ENCODE measurements at regions of chr15 and their contacts with region 1.

Region 1: DNA sequence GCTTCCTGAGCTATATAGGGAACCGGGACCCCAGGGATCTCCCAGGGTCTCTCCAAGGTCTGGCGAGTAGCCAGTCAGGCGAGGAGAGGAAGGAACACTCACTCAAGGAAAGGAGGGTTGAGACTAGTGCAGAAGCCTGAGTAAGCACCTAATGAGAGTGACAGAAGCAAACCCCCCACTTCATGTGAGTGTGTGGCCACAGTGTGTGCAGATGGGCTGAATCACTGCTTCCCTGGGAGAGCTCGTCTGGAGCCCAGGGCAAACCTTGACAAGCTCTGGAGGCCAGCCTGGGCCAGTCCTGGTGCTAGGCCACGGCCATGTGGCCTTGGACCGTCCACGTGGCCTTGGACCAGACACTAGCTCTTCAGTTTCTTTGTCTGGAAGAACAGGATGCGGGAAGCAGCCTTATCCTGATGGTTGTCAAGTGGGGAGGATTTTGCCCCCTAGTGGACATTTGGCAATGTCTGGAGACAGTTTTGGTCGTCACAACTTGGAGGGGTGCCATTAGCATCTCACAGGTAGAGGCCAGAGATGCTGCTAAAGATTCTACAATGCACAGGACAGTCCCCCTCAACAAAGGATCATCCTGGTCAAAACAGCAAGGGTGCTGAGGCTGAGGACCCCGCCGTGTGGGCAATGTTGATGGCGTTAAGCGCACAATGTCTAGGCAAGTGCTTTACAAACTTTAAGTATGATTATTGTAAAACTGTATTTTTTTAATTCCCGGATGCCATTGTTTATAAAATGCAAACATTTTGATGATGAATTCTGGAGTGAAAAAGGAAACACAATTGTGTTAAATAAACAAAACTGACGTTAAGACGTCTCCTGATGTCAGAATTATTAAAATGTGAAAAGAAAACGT is 34.8 kb upstream of the CTSH start:
- DNase-seq: peak; percentile 92 to 93
- ATAC-seq: peak; percentile 80 to 94
- H3K4me3 ChIP-seq: no peak overlapping the region
- H3K27ac ChIP-seq: peak overlapping the region; percentile 59 to 80
- H3K4me1 ChIP-seq: peaks cover 5% of the 10 kb centered on the region; the same call in 2 of the 3 replicates
- CTCF ChIP-seq: peak; percentile 90
- EP300 ChIP-seq: no peak
- POLR2A ChIP-seq: no peak
- RAD21 ChIP-seq: peak; percentile 78 to 81

Region 2: DNA sequence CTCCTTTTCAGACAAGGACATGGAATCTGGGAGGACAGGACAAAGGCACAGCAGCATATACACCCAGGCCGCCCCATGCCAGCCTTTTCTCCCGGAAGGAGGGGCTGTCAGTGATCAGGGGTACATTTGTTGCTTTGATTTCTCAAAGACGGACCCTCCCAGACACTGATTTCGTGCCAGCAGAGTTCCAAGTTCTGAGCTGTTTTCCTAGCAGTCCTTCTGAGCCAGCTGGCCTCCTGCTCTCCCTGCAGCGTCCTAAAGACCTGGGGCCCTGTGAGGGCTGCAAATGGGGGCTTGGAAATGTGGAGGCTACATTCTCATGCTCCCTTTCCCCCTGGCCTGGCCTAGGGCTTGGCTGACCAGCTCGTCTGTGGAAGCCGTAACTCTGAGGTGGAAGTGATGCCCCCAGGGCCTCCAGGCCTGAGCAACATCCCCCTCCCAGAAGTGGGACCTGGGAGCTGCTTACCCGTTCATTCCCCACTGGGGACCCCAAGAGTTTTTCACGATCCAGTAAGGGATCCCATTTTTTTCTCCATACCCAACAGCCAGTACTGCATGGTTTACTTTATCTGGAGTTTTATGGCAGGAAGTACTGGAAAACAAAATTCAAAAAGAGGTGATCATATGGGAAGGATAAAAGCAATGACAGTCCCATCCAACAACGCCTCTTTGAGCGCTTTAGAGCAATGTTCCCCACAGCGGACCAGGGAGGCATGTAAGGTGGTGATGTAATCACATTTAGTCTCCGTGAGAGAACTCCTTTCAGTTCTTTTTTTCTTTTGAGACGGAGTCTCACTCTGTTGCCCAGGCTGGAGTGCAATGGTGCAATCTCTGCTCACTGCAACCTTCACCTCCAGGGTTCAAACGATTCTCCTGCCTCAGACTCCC is 56.9 kb before region 1 on chr15:
- CTCF ChIA-PET with region 1: interaction called, 26 read pairs
- POLR2A ChIA-PET with region 1: no interaction called
- DNase-seq: no peak
- ATAC-seq: no peak
- H3K4me3 ChIP-seq: no peak overlapping the region
- H3K27ac ChIP-seq: no peak overlapping the region
- H3K4me1 ChIP-seq: no peaks in the 10 kb centered on the region
- CTCF ChIP-seq: no peak
- EP300 ChIP-seq: no peak
- POLR2A ChIP-seq: no peak
- RAD21 ChIP-seq: no peak

Region 3: GRCh38 chr15:78944669-78945407 is 34.9 kb before region 1 on chr15 and contains the start of gene CTSH:
- CTCF ChIA-PET with region 1: interaction called, 14 read pairs
- POLR2A ChIA-PET with region 1: no interaction called
- DNase-seq: peak; percentile 65 to 78
- ATAC-seq: peak; percentile 74 to 86
- H3K4me3 ChIP-seq: peak within 1 kb of the TSS; percentile 47
- H3K27ac ChIP-seq: peak within 1 kb of the TSS; percentile 66 to 85
- H3K4me1 ChIP-seq: peaks cover 12% of the 10 kb centered on the region; the same call in 2 of the 3 replicates
- CTCF ChIP-seq: no peak
- EP300 ChIP-seq: no peak
- POLR2A ChIP-seq: peak; percentile 39
- RAD21 ChIP-seq: no peak
- polyA plus RNA-seq, gene CTSH: 33.3 and 33.4 TPM in 2 replicates

Region 4: GRCh38 chr15:78968539-78969271 is 11.0 kb before region 1 on chr15:
- CTCF ChIA-PET with region 1: interaction called, 27 read pairs
- POLR2A ChIA-PET with region 1: no interaction called
- DNase-seq: no peak
- ATAC-seq: no peak
- H3K4me3 ChIP-seq: no peak overlapping the region
- H3K27ac ChIP-seq: no peak overlapping the region
- H3K4me1 ChIP-seq: no peaks in the 10 kb centered on the region
- CTCF ChIP-seq: no peak
- EP300 ChIP-seq: no peak
- POLR2A ChIP-seq: no peak
- RAD21 ChIP-seq: no peak

Region 5: DNA sequence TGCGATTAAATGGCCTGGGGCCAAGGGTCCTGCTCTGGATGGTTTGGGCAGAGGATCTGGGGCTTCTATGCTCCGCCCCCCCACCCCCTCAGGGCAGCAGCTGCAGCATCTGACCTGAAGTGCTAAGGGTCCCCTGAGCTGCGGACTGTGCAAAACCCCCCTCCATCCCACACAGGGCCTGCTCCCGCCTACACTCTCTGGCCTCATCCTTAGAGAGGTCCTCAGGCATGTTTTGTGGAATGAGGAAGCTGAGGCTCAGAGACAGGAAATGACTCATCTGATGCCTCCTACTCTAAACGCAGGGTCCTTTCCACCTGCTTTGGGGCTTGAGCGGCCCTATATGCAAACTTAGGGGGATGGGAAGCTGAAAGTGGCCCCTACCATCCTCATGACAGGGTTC is 24.6 kb after region 1 on chr15:
- CTCF ChIA-PET with region 1: interaction called, 20 read pairs
- POLR2A ChIA-PET with region 1: no interaction called
- DNase-seq: peak in 1 of 2 experiments; percentile 72
- ATAC-seq: peak; percentile 35 to 73; a peak in 5 of 6 replicates
- H3K4me3 ChIP-seq: no peak overlapping the region
- H3K27ac ChIP-seq: peak overlapping the region; percentile 46 to 80
- H3K4me1 ChIP-seq: peaks cover 11% of the 10 kb centered on the region
- CTCF ChIP-seq: no peak
- EP300 ChIP-seq: no peak
- POLR2A ChIP-seq: no peak
- RAD21 ChIP-seq: no peak

Region 6: GRCh38 chr15:79572691-79573404 is 593.2 kb after region 1 on chr15:
- CTCF ChIA-PET with region 1: no interaction called
- POLR2A ChIA-PET with region 1: no interaction called
- DNase-seq: no peak
- ATAC-seq: no peak
- H3K4me3 ChIP-seq: no peak overlapping the region
- H3K27ac ChIP-seq: no peak overlapping the region
- H3K4me1 ChIP-seq: no peaks in the 10 kb centered on the region
- CTCF ChIP-seq: no peak
- EP300 ChIP-seq: no peak
- POLR2A ChIP-seq: no peak
- RAD21 ChIP-seq: no peak

Measured in A549 (cell line).